ENCODE measurements at regions of chr11 and their contacts with region 1.

Region 1: DNA sequence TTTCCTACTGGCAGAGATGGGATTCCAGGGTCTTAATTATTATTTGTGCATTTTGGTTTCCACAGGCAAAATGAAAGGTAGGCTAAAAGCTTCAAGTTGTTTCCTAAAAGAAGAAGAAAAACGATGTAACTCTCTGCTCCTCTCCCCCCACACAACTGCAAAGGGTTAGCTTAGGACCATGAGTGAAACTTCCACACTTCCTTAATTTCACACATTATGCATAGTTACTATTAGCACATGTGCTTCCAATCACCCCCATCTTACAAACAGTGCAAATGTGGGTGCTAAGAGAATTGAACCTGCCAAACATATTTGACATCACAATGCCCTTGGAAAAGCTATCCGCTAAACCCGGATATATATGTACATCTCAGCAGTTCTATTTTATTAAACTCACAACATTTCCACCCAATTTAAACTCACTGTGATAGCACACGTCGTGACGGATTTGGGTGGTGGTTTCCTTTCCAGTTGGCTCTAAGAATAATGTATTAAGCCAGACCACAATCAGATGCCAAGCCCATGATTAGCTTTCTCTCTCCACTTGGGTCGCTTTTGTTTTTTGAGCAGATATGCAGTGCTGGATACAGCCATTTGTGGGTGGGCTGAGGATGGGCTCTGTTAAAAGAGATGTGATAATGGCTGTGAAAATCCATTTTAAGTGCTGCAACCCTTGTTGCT is 245.0 kb upstream of the POU2AF2 start:
- DNase-seq: no peak
- H3K4me3 ChIP-seq: no peak overlapping the region
- H3K27ac ChIP-seq: no peak overlapping the region
- H3K4me1 ChIP-seq: no peaks in the 10 kb centered on the region
- H3K27me3 ChIP-seq: no peaks in the 10 kb centered on the region
- CTCF ChIP-seq: no peak
- EP300 ChIP-seq: no peak
- POLR2A ChIP-seq: no peak

Region 2: DNA sequence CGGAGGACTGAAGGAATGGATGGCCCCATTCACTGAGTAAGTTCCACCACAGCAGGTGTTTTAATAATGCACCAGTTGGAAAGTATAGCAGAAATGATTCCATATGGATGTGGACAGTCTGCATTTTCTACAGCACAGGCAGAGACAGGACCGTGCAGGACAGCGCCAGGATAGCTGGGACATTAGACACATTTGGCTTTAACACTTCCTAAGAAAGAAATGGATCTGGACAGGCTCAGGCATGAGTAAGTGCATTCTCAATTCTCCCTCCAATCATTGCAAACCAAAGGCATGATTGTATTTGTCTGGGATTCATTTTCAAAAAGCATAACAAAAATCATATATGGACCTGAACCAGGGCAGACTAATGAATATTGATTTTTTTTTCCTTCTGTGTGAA is 12.0 kb after region 1 on chr11:
- intact Hi-C with region 1: loop called in 1 of 4 experiments (anchors 1 kb)
- DNase-seq: no peak
- H3K4me3 ChIP-seq: no peak overlapping the region
- H3K27ac ChIP-seq: no peak overlapping the region
- H3K4me1 ChIP-seq: no peaks in the 10 kb centered on the region
- H3K27me3 ChIP-seq: peaks cover 4% of the 10 kb centered on the region
- CTCF ChIP-seq: no peak
- EP300 ChIP-seq: no peak
- POLR2A ChIP-seq: no peak